ENCODE measurements at regions of chr3 and their contacts with region 1.

Region 1: DNA sequence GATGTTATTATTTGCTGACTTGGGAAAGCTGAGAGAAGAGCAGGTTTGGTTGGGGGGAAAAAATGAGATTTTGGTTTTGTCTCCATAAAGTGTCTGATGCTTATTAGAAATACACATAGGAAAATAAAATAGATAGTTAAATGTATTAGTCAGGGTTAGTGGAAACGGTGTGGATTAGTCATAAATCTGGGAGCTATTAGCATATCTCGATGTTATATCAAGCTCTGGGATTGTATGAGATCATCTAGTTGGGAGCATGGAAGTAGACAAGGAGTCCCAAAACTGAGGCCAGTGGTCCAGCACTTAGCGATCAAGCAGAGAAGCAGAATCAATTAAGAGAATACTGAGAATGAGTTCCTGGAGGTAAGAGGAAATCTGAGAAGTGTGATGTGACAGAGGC is 845.5 kb downstream of the ROBO2 start:
- DNase-seq: no peak
- H3K4me3 ChIP-seq: no peak overlapping the region
- H3K27ac ChIP-seq: no peak overlapping the region
- H3K4me1 ChIP-seq: no peaks in the 10 kb centered on the region
- H3K27me3 ChIP-seq: no peaks in the 10 kb centered on the region
- CTCF ChIP-seq: no peak

Region 2: GRCh38 chr3:77815467-77815866 is 69.9 kb before region 1 on chr3:
- CTCF ChIA-PET with region 1: no interaction called
- POLR2A ChIA-PET with region 1: no interaction called
- intact Hi-C with region 1: no loop called
- DNase-seq: no peak
- H3K4me3 ChIP-seq: no peak overlapping the region
- H3K27ac ChIP-seq: no peak overlapping the region
- H3K4me1 ChIP-seq: no peaks in the 10 kb centered on the region
- H3K27me3 ChIP-seq: no peaks in the 10 kb centered on the region
- CTCF ChIP-seq: no peak

Region 3: GRCh38 chr3:77868725-77869124 is 16.7 kb before region 1 on chr3:
- CTCF ChIA-PET with region 1: no interaction called
- POLR2A ChIA-PET with region 1: no interaction called
- intact Hi-C with region 1: loop called (anchors 1 kb)
- DNase-seq: no peak
- H3K4me3 ChIP-seq: no peak overlapping the region
- H3K27ac ChIP-seq: no peak overlapping the region
- H3K4me1 ChIP-seq: no peaks in the 10 kb centered on the region
- H3K27me3 ChIP-seq: no peaks in the 10 kb centered on the region
- CTCF ChIP-seq: no peak